Cardiac septum (tissue), 1 donor: ENCODE measurements at regions of chr5 and their contacts with region 1.

Region 1: GRCh38 chr5:32076699-32077695 is 97.1 kb downstream of the GOLPH3 start:
- DNase-seq: no peak

Region 2: DNA sequence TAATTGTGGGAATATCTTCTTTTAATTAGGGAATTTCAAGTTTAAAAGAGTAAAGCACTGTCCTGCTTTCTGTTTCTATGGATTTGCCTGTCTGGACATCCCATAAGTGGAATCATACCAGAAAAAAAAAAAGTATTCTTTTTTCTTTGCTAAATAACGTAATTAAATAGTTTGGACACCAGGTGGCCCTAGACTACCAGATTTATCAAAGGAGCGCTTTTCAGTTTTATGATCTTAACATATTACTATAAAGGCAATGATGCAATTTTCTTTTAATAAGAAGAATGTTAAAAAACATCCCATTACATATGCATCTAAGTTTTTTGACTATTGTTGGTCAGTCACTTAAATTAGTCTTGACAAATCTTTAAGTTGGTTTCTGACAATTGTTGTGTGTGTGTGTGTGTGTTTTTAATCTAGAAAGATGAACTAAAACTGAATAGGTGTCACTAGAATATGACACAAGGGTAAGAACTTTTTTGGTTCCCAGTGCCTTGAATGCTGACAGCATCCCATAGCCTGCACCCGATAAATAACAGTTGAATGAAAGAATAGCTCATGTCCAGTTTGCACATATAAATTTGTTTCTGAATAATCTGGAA is 495.4 kb before region 1 on chr5:
- intact Hi-C with region 1: loop called (anchors 5 kb)
- DNase-seq: no peak

Region 3: DNA sequence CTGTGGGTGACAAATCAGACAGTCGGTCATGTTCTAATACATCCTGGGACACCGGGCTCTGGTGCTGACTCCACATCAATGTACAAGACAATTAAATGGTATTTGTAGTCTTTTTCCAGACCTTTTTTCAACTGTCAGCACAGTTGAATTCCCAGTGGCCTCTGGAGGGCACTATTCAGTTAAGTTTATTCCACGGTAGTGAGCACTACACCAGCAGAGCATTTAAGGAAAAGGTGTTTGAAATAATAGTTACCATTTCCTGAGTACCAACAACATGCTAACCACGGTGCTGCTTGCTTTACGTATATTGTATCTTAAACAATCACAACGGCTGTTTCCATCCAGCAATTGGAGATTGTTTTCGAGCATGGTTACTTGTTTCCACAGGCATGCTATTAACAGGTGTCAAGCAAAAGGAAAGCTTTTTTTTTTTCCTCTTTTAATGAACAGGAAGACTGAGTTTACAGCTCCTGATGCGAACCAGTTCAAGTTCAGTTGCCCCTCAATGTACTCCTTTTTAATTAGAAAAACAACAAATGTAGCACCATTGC is 251.4 kb before region 1 on chr5:
- intact Hi-C with region 1: loop called (anchors 5 kb)
- DNase-seq: no peak

Region 4: DNA sequence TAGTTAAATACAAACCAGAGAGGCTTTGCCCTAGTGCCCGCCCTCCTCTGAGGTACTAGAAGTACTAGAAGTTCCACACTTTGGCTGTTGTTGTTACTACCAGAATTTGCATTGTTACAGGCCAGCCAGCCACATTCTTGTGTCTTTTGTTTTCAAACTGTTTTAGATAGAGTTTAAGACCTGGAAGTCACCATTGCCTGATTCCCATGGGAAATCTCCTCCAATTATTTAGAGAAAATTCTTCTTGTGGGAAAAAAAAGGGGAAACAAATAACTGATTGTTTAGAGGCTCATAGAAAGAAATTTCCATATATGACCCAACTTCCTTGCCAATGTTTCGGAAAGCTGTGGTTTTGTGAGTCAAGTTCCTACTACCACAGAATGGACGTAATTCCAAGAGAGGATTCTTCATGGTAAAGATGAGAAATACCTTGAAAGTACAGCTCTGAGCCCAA is 155.1 kb before region 1 on chr5:
- intact Hi-C with region 1: loop called (anchors 5 kb)
- DNase-seq: no peak

Region 5: GRCh38 chr5:32109236-32109635 is 32.2 kb after region 1 on chr5:
- intact Hi-C with region 1: no loop called
- DNase-seq: no peak